HCT116 (cell line): ENCODE measurements at regions of chr6 and their contacts with region 1.

Region 1: DNA sequence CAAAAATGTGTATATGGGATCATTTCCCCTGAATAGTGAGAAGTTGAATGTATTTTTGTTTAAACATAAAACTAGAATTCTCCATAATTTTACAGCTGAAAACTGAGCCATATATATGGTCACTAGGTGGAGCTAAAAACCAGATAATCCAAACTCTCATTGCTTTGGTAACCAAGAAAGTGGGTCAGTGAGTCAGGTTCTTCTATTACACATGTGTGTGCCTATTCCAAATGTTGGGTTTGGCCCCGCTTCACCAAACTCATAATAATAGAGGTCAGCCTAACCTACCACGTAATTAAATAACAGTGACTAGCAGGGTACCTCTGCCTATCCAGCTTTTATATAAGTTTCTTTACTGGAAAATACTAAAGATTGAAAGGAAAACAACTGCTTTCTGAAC is 19.3 kb upstream of the RNGTT start:
- DNase-seq: peak; percentile 57
- ATAC-seq: peak; percentile 83
- H3K4me3 ChIP-seq: no peak overlapping the region
- H3K27ac ChIP-seq: no peak overlapping the region
- H3K4me1 ChIP-seq: 0 out of 4 replicates have a peak, but pooled peaks cover 2% of the 10 kb centered on the region in 2 experiments
- H3K27me3 ChIP-seq: 0 out of 2 replicates have a peak, but pooled peaks cover 3% of the 10 kb centered on the region
- CTCF ChIP-seq: peak; percentile 52 to 80 (median 79)
- POLR2A ChIP-seq: no peak
- RAD21 ChIP-seq: peak; percentile 93

Region 2: DNA sequence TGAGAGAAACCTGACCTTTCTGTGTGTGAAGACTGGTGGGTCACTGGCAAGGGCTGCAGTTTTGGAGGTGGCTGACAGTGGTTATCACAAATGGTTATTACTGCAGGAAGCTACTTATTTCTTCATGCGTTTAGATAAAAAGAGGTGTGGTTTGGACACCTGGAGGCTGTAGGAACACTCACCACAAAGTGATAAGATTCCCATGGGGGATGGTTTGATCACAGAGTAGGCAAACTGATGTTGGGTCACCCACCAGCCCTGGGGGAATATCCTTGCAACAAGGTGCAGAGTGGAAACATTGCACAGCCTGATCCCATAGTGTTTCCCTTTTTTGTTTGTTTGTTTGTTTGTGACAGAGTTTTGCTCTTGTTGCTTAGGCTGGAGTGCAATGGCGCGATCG is 14.6 kb after region 1 on chr6:
- CTCF ChIA-PET with region 1: interaction called, 15 read pairs
- POLR2A ChIA-PET with region 1: interaction called, 3 read pairs
- RAD21 ChIA-PET with region 1: no interaction called
- intact Hi-C with region 1: no loop called
- DNase-seq: no peak
- ATAC-seq: no peak
- H3K4me3 ChIP-seq: no peak overlapping the region
- H3K27ac ChIP-seq: no peak overlapping the region
- H3K4me1 ChIP-seq: no peaks in the 10 kb centered on the region
- H3K27me3 ChIP-seq: no peaks in the 10 kb centered on the region
- CTCF ChIP-seq: no peak
- POLR2A ChIP-seq: no peak
- RAD21 ChIP-seq: no peak

Region 3: GRCh38 chr6:89145787-89146646 is 163.3 kb after region 1 on chr6 and contains the start of gene PM20D2:
- CTCF ChIA-PET with region 1: interaction called, 11 read pairs
- POLR2A ChIA-PET with region 1: no interaction called
- RAD21 ChIA-PET with region 1: interaction called in 1 of 2 experiments, 4 read pairs
- intact Hi-C with region 1: loop called (anchors 10 kb)
- DNase-seq: peak; percentile 48
- ATAC-seq: peak; percentile 87
- H3K4me3 ChIP-seq: peak within 1 kb of the TSS; percentile 68 to 70
- H3K27ac ChIP-seq: peak within 1 kb of the TSS; percentile 90
- H3K4me1 ChIP-seq: peaks cover 18 to 30% of the 10 kb centered on the region in 2 experiments
- H3K27me3 ChIP-seq: no peaks in the 10 kb centered on the region
- CTCF ChIP-seq: no peak
- POLR2A ChIP-seq: peak; percentile 85
- RAD21 ChIP-seq: no peak
- total RNA-seq, gene PM20D2: 29.2 TPM

Region 4: DNA sequence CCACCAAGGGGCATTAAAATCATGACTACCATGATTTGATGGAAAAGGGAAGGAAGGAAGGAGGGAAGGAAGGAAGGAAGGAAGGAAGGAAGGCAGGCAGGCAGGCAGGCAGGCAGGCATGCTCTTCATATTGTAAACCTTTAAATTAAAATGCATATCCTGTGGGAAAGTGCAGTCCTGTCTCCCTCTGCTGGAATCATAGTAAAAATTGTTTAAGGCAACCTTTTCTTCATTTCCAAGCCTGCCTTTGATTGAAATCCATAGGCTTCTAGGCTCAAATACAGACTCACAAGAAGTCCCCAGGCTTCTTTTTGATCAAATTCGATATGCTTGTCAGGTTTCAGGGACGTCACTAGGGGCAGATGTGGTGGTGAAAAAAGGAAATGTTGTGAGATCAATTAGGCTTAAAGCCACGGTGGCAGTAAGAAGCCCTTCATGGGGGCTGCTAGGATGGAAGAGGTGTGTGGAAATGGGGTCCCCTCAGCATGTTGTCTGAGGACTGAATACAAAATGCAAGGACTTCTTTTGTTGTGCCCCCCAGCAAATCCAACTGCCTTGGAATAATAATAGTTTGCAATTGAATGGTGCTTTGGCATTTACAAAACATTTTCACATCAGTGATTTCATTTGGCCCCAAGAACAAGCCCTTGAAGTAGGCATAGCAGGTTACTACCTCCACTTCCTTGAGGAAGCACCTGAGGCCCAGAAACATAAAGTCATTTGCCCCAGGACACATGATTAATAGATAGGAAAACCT is 260.0 kb after region 1 on chr6:
- CTCF ChIA-PET with region 1: interaction called, 43 read pairs
- POLR2A ChIA-PET with region 1: interaction called, 3 read pairs
- RAD21 ChIA-PET with region 1: interaction called, 6 to 10 read pairs
- intact Hi-C with region 1: loop called (anchors 1 kb)
- DNase-seq: peak; percentile 59
- ATAC-seq: peak; percentile 86
- H3K4me3 ChIP-seq: no peak overlapping the region
- H3K27ac ChIP-seq: no peak overlapping the region
- H3K4me1 ChIP-seq: no peaks in the 10 kb centered on the region
- H3K27me3 ChIP-seq: no peaks in the 10 kb centered on the region
- CTCF ChIP-seq: peak; percentile 46 to 74 (median 52); a peak in 5 of 6 replicates
- POLR2A ChIP-seq: no peak
- RAD21 ChIP-seq: peak; percentile 86

Region 5: DNA sequence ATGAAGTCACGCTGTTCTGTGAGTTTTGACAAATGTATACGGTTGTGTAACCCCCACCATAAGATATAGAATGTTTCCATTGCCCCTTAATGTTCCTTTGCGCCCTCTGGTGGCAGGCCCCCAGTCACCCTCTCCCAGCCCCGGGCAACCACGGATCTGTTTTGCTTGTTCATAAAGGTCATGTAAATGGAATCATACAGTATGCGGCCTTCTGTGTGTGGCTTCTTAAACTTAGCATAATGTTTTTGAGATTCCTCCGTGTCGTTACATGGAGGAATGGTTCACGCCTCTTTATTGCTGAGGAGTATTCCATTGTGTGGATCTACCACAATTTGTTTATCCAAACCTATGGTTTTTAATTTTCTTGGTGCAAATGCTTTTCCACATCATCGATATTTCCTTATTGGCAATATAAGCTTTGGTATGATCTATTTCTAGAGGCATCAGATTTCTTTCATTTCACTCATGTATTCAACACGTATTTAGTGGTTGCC is 627.5 kb after region 1 on chr6:
- CTCF ChIA-PET with region 1: interaction called, 9 read pairs
- POLR2A ChIA-PET with region 1: no interaction called
- RAD21 ChIA-PET with region 1: no interaction called
- intact Hi-C with region 1: loop called (anchors 1 kb)
- DNase-seq: peak; percentile 19
- ATAC-seq: peak; percentile 89
- H3K4me3 ChIP-seq: no peak overlapping the region
- H3K27ac ChIP-seq: no peak overlapping the region
- H3K4me1 ChIP-seq: no peaks in the 10 kb centered on the region
- H3K27me3 ChIP-seq: no peaks in the 10 kb centered on the region
- CTCF ChIP-seq: peak; percentile 64 to 95 (median 89); a peak in 5 of 6 replicates
- POLR2A ChIP-seq: no peak
- RAD21 ChIP-seq: peak; percentile 63